Sigmoid colon (tissue), 7 donors: ENCODE measurements at regions of chr17 and their contacts with region 1.

Region 1: GRCh38 chr17:78383725-78384471 is 5.4 kb downstream of the PGS1 start:
- DNase-seq: peak; percentile 93
- H3K4me3 ChIP-seq: no peak overlapping the region
- H3K27ac ChIP-seq: peak overlapping the region; percentile 52 to 77 (median 70)
- H3K4me1 ChIP-seq: peaks cover 0 to 72% (median 62%) of the 10 kb centered on the region in 4 donors
- H3K27me3 ChIP-seq: no peaks in the 10 kb centered on the region
- CTCF ChIP-seq: no peak
- EP300 ChIP-seq: peak in 3 of 4 donors; percentile 51 to 90 (median 72)
- POLR2A ChIP-seq: no peak

Region 2: GRCh38 chr17:78289802-78290363 is 94.0 kb before region 1 on chr17:
- intact Hi-C with region 1: loop called (anchors 5 kb)
- DNase-seq: peak; percentile 91
- H3K4me3 ChIP-seq: no peak overlapping the region
- H3K27ac ChIP-seq: no peak overlapping the region
- H3K4me1 ChIP-seq: peaks cover 0 to 9% (median 0%) of the 10 kb centered on the region in 4 donors
- H3K27me3 ChIP-seq: no peaks in the 10 kb centered on the region
- CTCF ChIP-seq: peak; percentile 67 to 97 (median 83)
- EP300 ChIP-seq: no peak
- POLR2A ChIP-seq: no peak